Gastrocnemius medialis (tissue), 4 donors: ENCODE measurements at regions of chr1 and their contacts with region 1.

Region 1: GRCh38 chr1:33338440-33339211 is 17.7 kb upstream of the A3GALT2 start:
- DNase-seq: peak; percentile 90 to 91
- ATAC-seq: peak; percentile 65 to 76
- H3K4me3 ChIP-seq: peak overlapping the region; percentile 50 to 56 (median 52)
- H3K27ac ChIP-seq: peak overlapping the region; percentile 94 to 99 (median 98)
- H3K4me1 ChIP-seq: peaks cover 95 to 97% of the 10 kb centered on the region in 2 donors
- H3K27me3 ChIP-seq: no peaks in the 10 kb centered on the region
- CTCF ChIP-seq: no peak
- POLR2A ChIP-seq: peak; percentile 73 to 93

Region 2: GRCh38 chr1:33036526-33037503 is 301.8 kb before region 1 on chr1 and contains the start of gene AK2:
- in situ Hi-C with region 1: no loop called
- intact Hi-C with region 1: loop called (anchors 5 kb)
- DNase-seq: peak; percentile 98
- ATAC-seq: peak; percentile 93
- H3K4me3 ChIP-seq: peak within 1 kb of the TSS; percentile 78 to 99 (median 94)
- H3K27ac ChIP-seq: peak within 1 kb of the TSS; percentile 95 to 99 (median 98)
- H3K4me1 ChIP-seq: peaks cover 42 to 46% of the 10 kb centered on the region in 2 donors
- H3K27me3 ChIP-seq: no peaks in the 10 kb centered on the region
- CTCF ChIP-seq: no peak
- POLR2A ChIP-seq: peak; percentile 92 to 96
- total RNA-seq, gene AK2: 125 to 261 (median 152) TPM